ENCODE measurements at regions of chr6 and their contacts with region 1.

Region 1: DNA sequence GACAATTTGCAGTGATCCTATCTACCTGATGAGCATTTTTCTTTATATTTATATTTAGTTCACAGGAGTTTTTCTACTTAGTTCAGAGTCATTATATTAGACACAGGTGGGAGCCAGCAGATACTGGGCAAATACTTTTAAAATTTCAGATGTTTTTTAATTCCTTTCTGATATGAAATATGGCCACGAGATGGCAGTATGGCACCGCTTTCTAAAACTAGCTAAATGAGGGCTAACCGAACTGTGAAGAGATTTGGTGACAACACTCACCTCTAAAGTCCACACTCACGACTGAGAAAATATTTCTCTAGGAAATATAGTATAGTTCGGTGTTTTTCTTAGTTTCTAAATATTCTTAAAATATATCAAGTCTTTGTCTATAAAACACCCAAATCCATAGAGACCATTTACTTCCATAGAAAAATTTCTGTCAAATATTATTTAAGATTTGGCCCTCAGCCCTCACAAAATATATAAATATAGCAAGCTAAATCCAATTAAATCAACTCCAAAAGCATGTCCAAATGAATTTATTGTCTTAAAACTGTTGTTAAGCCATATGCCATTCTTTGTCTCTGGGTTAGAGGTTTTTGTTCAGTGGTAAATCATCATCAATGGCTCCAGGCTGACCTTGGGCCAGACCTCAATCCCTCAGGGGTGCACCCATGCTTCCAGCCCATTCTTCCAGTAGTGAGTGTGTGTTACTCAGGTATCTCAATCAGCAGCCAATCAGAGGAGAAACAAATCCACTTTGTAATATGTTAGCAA is 63.6 kb downstream of the HUS1B start:
- DNase-seq: peak; percentile 67
- H3K4me3 ChIP-seq: no peak overlapping the region
- H3K27ac ChIP-seq: no peak overlapping the region
- H3K4me1 ChIP-seq: no peaks in the 10 kb centered on the region
- H3K27me3 ChIP-seq: no peaks in the 10 kb centered on the region
- CTCF ChIP-seq: peak; percentile 15 to 27
- POLR2A ChIP-seq: no peak

Region 2: GRCh38 chr6:474453-475185 is 118.7 kb before region 1 on chr6:
- CTCF ChIA-PET with region 1: no interaction called
- POLR2A ChIA-PET with region 1: no interaction called
- dilution Hi-C with region 1: no loop called
- intact Hi-C with region 1: no loop called
- DNase-seq: no peak
- H3K4me3 ChIP-seq: no peak overlapping the region
- H3K27ac ChIP-seq: no peak overlapping the region
- H3K4me1 ChIP-seq: no peaks in the 10 kb centered on the region
- H3K27me3 ChIP-seq: no peaks in the 10 kb centered on the region
- CTCF ChIP-seq: no peak
- POLR2A ChIP-seq: no peak

Region 3: DNA sequence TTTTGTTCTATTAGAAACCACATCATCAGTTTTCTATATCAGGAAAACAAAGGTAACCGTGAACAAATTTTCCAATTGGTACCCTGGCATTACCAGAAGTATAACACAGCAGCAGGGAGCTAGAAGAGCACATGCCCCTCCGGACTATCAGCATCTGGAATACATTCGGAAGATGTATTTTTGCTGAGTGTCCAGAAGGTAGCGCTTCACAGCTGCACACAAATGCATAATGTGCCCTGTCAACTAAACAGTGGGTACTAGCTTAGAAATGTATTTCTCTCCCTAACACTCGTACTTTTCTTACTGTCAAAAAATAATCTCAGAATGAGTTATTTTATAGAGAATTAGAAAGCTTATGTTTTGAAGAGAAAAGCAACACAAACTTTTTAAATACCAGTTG is 14.0 kb before region 1 on chr6:
- CTCF ChIA-PET with region 1: interaction called, 15 read pairs
- POLR2A ChIA-PET with region 1: no interaction called
- dilution Hi-C with region 1: no loop called
- intact Hi-C with region 1: no loop called
- DNase-seq: no peak
- H3K4me3 ChIP-seq: no peak overlapping the region
- H3K27ac ChIP-seq: no peak overlapping the region
- H3K4me1 ChIP-seq: no peaks in the 10 kb centered on the region
- H3K27me3 ChIP-seq: no peaks in the 10 kb centered on the region
- CTCF ChIP-seq: peak in 1 of 2 donors; percentile 8
- POLR2A ChIP-seq: no peak

Region 4: GRCh38 chr6:781350-781961 is 188.1 kb after region 1 on chr6:
- CTCF ChIA-PET with region 1: interaction called, 14 read pairs
- POLR2A ChIA-PET with region 1: no interaction called
- dilution Hi-C with region 1: no loop called
- intact Hi-C with region 1: no loop called
- DNase-seq: no peak
- H3K4me3 ChIP-seq: no peak overlapping the region
- H3K27ac ChIP-seq: no peak overlapping the region
- H3K4me1 ChIP-seq: no peaks in the 10 kb centered on the region
- H3K27me3 ChIP-seq: no peaks in the 10 kb centered on the region
- CTCF ChIP-seq: no peak
- POLR2A ChIP-seq: no peak

Region 5: GRCh38 chr6:1381481-1382330 is 788.4 kb after region 1 on chr6:
- CTCF ChIA-PET with region 1: interaction called, 58 read pairs
- POLR2A ChIA-PET with region 1: interaction called, 3 read pairs
- dilution Hi-C with region 1: no loop called
- intact Hi-C with region 1: loop called (anchors 1 kb)
- DNase-seq: peak; percentile 3
- H3K4me3 ChIP-seq: no peak overlapping the region
- H3K27ac ChIP-seq: no peak overlapping the region
- H3K4me1 ChIP-seq: no peaks in the 10 kb centered on the region
- H3K27me3 ChIP-seq: peaks cover 88 to 98% of the 10 kb centered on the region in 2 experiments
- CTCF ChIP-seq: peak; percentile 73 to 74
- POLR2A ChIP-seq: no peak

Region 6: GRCh38 chr6:1436334-1437306 is 843.3 kb after region 1 on chr6:
- CTCF ChIA-PET with region 1: interaction called, 25 read pairs
- POLR2A ChIA-PET with region 1: no interaction called
- dilution Hi-C with region 1: no loop called
- intact Hi-C with region 1: no loop called
- DNase-seq: peak; percentile 70
- H3K4me3 ChIP-seq: no peak overlapping the region
- H3K27ac ChIP-seq: no peak overlapping the region
- H3K4me1 ChIP-seq: no peaks in the 10 kb centered on the region
- H3K27me3 ChIP-seq: no peaks in the 10 kb centered on the region
- CTCF ChIP-seq: peak; percentile 56 to 67
- POLR2A ChIP-seq: no peak

Measured in endothelial cell of umbilical vein (primary cell).